HAP-1 (cell line): ENCODE measurements at regions of chr2 and their contacts with region 1.

Region 1: GRCh38 chr2:39062320-39062719 is 58.5 kb downstream of the SOS1 start:
- DNase-seq: no peak
- H3K4me3 ChIP-seq: no peak overlapping the region
- H3K4me1 ChIP-seq: peaks cover 17% of the 10 kb centered on the region
- H3K27me3 ChIP-seq: no peaks in the 10 kb centered on the region

Region 2: GRCh38 chr2:39221488-39221887 is 159.2 kb after region 1 on chr2:
- in situ Hi-C with region 1: loop called (anchors 5 kb)
- DNase-seq: no peak
- H3K4me3 ChIP-seq: no peak overlapping the region
- H3K4me1 ChIP-seq: no peaks in the 10 kb centered on the region
- H3K27me3 ChIP-seq: no peaks in the 10 kb centered on the region